Activated T-helper 1 cell treated with anti-CD3 and anti-CD28 coated beads, Interleukin-12 subunit alpha, Interleukin-12 subunit beta, Interleukin-2, Interleukin-4 antibody, amounts not matched to agents 30 ng/mL and 10 ng/mL and 1 ng/mL, durations not matched to agents 14 hours and 24 hours and 36 hours (primary cell): ENCODE measurements at regions of chr1 and their contacts with region 1.

Region 1: GRCh38 chr1:202192770-202193613 is 607 bp upstream of the LGR6 start:
- DNase-seq: peak; percentile 31
- H3K4me3 Mint-ChIP-seq: no peak overlapping the region
- H3K27ac Mint-ChIP-seq: no peak overlapping the region
- H3K4me1 Mint-ChIP-seq: no peaks in the 10 kb centered on the region
- H3K27me3 Mint-ChIP-seq: peaks cover 42% of the 10 kb centered on the region

Region 2: DNA sequence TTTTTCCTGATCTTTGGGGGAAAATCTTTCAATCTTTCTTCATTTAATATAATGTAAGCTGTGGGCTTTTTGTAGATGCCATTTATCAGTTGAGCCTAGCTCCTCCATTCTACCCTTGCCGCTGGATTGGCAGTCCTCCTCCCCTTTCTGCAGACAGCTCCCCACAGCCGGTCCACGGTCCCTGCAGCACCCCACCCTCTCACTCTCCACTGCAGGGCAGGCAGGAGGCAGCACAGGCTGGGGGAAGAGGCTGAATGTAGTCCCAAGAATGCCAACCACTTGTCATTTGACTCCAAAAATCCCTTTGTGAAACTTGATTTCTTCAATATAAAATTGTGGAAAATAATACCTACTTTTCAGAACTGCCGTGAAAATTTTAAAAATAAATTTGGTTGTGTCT is 420.6 kb after region 1 on chr1:
- intact Hi-C with region 1: loop called (anchors 5 kb)
- DNase-seq: no peak
- H3K4me3 Mint-ChIP-seq: no peak overlapping the region
- H3K27ac Mint-ChIP-seq: no peak overlapping the region
- H3K4me1 Mint-ChIP-seq: peaks cover 22% of the 10 kb centered on the region
- H3K27me3 Mint-ChIP-seq: peaks cover 11% of the 10 kb centered on the region

Region 3: DNA sequence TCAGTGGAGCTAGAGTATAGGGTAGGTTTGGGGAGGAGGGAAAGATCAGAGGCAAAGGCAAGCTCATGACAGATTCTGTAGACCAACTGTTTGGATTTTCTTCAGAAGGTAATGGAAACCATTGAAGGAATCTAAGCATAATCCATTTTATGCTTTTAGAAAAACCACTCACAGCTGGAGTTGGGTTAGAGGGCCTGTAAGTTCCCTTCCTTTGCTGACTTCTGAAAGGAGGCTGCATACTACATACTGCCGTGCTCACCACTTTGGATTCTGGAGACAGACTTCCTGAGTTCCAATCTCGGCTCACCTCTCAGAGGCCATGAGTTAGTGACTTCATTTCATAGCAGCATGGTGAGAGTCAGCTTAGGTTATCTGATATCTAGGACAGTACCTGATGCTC is 523.7 kb after region 1 on chr1:
- intact Hi-C with region 1: loop called (anchors 1 kb)
- DNase-seq: no peak
- H3K4me3 Mint-ChIP-seq: no peak overlapping the region
- H3K27ac Mint-ChIP-seq: no peak overlapping the region
- H3K4me1 Mint-ChIP-seq: no peaks in the 10 kb centered on the region
- H3K27me3 Mint-ChIP-seq: peaks cover 48% of the 10 kb centered on the region